ENCODE measurements at regions of chr11 and their contacts with region 1.

Region 1: GRCh38 chr11:73478738-73479347 is 102.6 kb downstream of the RELT start:
- DNase-seq: peak; percentile 2
- ATAC-seq: no peak
- H3K4me3 Mint-ChIP-seq: no peak overlapping the region
- H3K27ac Mint-ChIP-seq: no peak overlapping the region
- H3K4me1 Mint-ChIP-seq: no peaks in the 10 kb centered on the region
- H3K27me3 Mint-ChIP-seq: no peaks in the 10 kb centered on the region
- CTCF ChIP-seq: peak; percentile 50

Region 2: DNA sequence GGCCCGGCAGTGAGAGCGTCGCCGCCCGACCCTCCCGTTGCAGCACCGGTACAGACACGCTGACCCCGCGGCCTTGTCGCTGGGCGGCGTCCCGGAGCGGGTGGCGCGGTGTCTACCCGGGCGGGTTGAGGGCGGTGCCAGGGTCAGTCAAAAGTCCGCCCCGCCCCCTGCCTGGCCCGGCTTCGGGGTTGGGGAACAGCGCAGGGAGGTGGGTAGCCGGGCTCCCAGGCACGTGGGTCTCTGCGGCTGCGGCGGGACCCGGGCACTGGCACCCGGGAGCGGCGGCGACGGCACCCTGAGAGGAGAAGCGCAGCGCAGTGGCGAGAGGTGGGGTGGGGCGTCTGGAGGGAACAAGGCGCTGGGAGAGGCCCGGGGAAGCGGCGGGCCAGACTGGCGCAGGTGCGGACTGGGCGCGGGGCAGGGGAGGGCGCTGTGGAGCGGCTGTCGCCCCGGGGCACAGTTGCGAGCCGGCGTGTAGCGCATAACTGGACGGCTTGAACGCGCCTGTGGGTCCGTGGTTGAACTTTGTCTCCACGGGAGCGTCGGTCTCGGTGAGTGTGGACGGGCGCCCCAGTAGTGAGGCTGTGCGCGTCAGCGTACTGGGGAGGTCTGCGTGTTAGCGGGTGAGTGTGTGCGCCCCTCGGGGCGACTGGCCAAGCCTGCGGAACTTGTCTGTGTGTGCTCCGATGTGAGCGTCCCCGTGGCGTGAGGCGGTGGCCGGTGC is 260.6 kb before region 1 on chr11 and contains the start of gene P2RY2:
- CTCF ChIA-PET with region 1: no interaction called
- POLR2A ChIA-PET with region 1: no interaction called
- intact Hi-C with region 1: no loop called
- DNase-seq: peak; percentile 53
- ATAC-seq: peak; percentile 89
- H3K4me3 Mint-ChIP-seq: peak within 1 kb of the TSS; percentile 44
- H3K27ac Mint-ChIP-seq: no peak within 1 kb of the TSS
- H3K4me1 Mint-ChIP-seq: peaks cover 2% of the 10 kb centered on the region
- H3K27me3 Mint-ChIP-seq: peaks cover 21% of the 10 kb centered on the region
- CTCF ChIP-seq: peak; percentile 72
- total RNA-seq, gene P2RY2: not detected

Region 3: GRCh38 chr11:73350908-73351636 is 127.8 kb before region 1 on chr11:
- CTCF ChIA-PET with region 1: no interaction called
- POLR2A ChIA-PET with region 1: no interaction called
- intact Hi-C with region 1: no loop called
- DNase-seq: peak; percentile 74
- ATAC-seq: peak; percentile 94
- H3K4me3 Mint-ChIP-seq: no peak overlapping the region
- H3K27ac Mint-ChIP-seq: peak overlapping the region; percentile 41
- H3K4me1 Mint-ChIP-seq: peaks cover 2% of the 10 kb centered on the region
- H3K27me3 Mint-ChIP-seq: no peaks in the 10 kb centered on the region
- CTCF ChIP-seq: peak; percentile 97

Region 4: DNA sequence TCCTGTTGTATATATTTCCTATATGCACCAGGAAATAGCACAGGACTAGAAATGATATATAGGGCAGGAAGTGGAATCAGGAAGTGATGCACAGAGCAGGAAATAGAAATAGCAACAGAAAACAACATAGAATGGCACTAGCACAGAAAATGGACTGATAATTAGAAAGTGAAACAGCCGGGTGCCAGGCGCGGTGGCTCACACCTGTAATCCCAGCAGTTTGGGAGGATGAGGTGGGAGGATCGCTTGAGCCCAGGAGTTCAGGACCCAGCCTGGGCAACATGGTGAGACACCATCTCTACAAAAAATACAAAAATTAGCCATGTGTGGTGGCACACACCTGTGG is 112.6 kb before region 1 on chr11:
- CTCF ChIA-PET with region 1: no interaction called
- POLR2A ChIA-PET with region 1: no interaction called
- intact Hi-C with region 1: no loop called
- DNase-seq: peak; percentile 55
- ATAC-seq: peak; percentile 76
- H3K4me3 Mint-ChIP-seq: no peak overlapping the region
- H3K27ac Mint-ChIP-seq: peak overlapping the region; percentile 89
- H3K4me1 Mint-ChIP-seq: peaks cover 33% of the 10 kb centered on the region
- H3K27me3 Mint-ChIP-seq: no peaks in the 10 kb centered on the region
- CTCF ChIP-seq: no peak

Region 5: GRCh38 chr11:73384872-73385689 is 93.8 kb before region 1 on chr11:
- CTCF ChIA-PET with region 1: no interaction called
- POLR2A ChIA-PET with region 1: no interaction called
- intact Hi-C with region 1: no loop called
- DNase-seq: peak; percentile 67
- ATAC-seq: peak; percentile 84
- H3K4me3 Mint-ChIP-seq: peak overlapping the region; percentile 32
- H3K27ac Mint-ChIP-seq: peak overlapping the region; percentile 72
- H3K4me1 Mint-ChIP-seq: peaks cover 59% of the 10 kb centered on the region
- H3K27me3 Mint-ChIP-seq: no peaks in the 10 kb centered on the region
- CTCF ChIP-seq: no peak

Region 6: DNA sequence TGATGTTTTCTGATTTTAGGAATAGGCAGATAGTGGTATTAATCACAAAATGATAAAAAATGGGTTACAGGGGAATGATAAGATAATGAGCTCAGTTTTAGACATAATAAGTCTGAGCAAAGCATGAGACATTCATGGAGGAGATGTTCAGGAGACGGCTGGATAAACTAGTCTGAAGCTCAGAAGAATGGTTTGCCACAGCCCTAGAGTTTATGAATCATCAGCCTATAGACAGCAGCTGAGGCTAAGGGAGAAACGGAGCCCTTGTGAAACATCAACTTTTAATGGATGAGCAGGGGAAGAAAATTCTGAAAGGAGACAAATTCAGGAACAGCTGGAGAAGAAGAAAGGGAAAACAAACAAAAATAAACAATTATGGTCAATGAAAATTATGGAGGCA is 15.5 kb before region 1 on chr11:
- CTCF ChIA-PET with region 1: interaction called, 16 read pairs
- POLR2A ChIA-PET with region 1: interaction called, 4 read pairs
- intact Hi-C with region 1: no loop called
- DNase-seq: no peak
- ATAC-seq: no peak
- H3K4me3 Mint-ChIP-seq: no peak overlapping the region
- H3K27ac Mint-ChIP-seq: no peak overlapping the region
- H3K4me1 Mint-ChIP-seq: no peaks in the 10 kb centered on the region
- H3K27me3 Mint-ChIP-seq: no peaks in the 10 kb centered on the region
- CTCF ChIP-seq: no peak

Region 7: GRCh38 chr11:73493956-73494598 is 15.2 kb after region 1 on chr11:
- CTCF ChIA-PET with region 1: interaction called, 14 read pairs
- POLR2A ChIA-PET with region 1: no interaction called
- intact Hi-C with region 1: no loop called
- DNase-seq: no peak
- ATAC-seq: no peak
- H3K4me3 Mint-ChIP-seq: no peak overlapping the region
- H3K27ac Mint-ChIP-seq: no peak overlapping the region
- H3K4me1 Mint-ChIP-seq: no peaks in the 10 kb centered on the region
- H3K27me3 Mint-ChIP-seq: no peaks in the 10 kb centered on the region
- CTCF ChIP-seq: no peak